Motor neuron (in vitro differentiated cells): ENCODE measurements at regions of chr6 and their contacts with region 1.

Region 1: DNA sequence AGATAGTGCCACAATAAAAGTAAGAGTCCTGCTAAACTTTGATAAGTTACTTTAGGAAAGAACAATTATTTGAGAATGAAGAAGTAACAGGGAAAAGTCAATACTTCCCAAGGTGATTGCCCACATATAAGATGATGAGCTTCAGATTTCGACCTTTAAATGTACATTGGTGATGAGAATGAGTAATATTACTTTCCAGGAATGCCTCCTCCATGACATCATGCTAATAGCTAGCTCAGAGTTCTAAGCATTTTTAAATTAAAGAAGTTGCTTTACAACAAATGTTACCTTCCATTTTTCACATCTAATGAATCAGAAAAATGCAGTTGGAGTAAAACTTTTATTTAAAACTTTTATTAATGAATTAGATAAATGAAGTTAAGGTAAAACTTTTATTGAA is 22.5 kb upstream of the OPN5 start:
- ATAC-seq: peak in 1 of 8 experiments; percentile 23
- H3K4me3 ChIP-seq: no peak overlapping the region
- H3K27ac ChIP-seq: no peak overlapping the region
- H3K4me1 ChIP-seq: no peaks in the 10 kb centered on the region

Region 2: DNA sequence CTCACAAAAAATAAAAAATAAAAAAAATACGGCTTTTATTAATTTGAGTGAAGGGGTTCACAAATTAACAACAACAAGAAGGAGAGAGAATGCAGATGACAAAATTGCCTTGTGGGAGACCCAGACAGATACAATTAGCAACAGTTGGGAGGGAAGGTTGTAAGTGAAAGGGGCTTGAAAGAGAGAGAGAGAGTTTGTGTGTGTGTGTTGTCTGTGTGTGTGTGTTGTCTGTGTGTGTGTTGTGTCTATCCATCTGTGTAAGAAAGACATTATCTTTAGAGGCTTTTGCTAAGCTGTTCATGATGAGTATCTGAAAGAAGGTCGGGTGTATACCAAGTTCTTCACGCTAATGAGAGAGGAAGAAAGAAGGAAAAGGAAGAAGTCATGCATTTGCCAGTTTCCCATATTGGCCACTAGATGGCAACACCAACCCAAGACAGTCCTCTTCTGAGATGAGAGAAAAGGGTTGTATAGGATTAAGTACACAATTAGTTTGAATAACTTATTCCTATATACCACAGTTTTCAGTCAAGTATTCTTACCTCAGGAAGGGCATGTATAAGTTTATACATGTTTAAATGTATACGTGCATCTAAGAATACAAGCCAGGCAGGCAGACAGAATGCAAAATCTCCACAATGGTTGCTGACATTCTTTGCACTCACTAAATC is 345.5 kb before region 1 on chr6:
- in situ Hi-C with region 1: loop called in 1 of 9 experiments (anchors 25 kb)
- ATAC-seq: peak; percentile 52 to 94 (median 73)
- H3K4me3 ChIP-seq: no peak overlapping the region
- H3K27ac ChIP-seq: no peak overlapping the region
- H3K4me1 ChIP-seq: no peaks in the 10 kb centered on the region

Region 3: GRCh38 chr6:47655719-47656595 is 103.4 kb before region 1 on chr6:
- in situ Hi-C with region 1: loop called in 1 of 9 experiments (anchors 25 kb)
- ATAC-seq: peak; percentile 79 to 100 (median 95)
- H3K4me3 ChIP-seq: no peak overlapping the region
- H3K27ac ChIP-seq: no peak overlapping the region
- H3K4me1 ChIP-seq: no peaks in the 10 kb centered on the region